Breast epithelium (tissue), 4 donors: ENCODE measurements at regions of chr11 and their contacts with region 1.

Region 1: DNA sequence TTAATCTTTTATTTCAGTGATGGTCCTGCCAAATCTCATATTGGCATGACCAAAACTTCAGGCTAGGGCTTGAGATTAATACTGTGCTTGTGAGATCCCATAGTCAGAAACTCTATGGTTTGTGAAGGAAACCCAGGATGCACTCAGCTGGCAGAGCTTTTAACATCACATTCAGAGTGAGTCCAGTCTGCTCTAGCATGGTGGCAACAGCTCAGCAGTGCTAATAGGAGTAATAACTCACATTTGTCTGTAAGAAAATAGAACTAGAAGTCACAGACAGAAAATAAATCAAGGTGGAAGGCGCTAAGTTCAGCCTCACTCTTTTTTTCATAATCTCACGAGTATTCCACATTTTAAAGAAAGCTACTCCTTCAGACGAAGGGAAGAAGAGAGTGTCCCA is 549.3 kb upstream of the TENM4 start:
- DNase-seq: no peak
- H3K4me3 ChIP-seq: no peak overlapping the region
- H3K27ac ChIP-seq: no peak overlapping the region
- H3K4me1 ChIP-seq: no peaks in the 10 kb centered on the region
- H3K27me3 ChIP-seq: no peaks in the 10 kb centered on the region
- CTCF ChIP-seq: no peak
- POLR2A ChIP-seq: no peak

Region 2: DNA sequence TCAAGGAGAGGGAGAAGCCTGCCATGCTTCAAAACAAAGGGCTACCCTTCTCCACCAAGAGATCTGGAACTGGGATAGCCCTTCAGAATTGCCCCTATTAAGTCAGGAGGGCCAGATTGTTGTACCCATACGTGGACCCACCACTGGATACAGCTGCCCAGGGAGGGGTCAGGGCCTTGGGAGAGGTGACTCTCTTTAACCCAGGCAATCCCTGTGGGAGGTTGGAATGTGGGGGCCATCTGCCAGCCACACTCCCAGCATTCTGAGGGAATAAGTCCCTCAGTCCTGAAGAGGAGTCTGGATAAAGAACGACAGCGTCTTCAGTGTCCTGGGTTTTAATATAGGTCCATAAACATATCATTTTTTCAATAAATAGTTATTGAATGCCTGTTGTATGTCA is 38.9 kb after region 1 on chr11:
- intact Hi-C with region 1: loop called (anchors 2 kb)
- DNase-seq: no peak
- H3K4me3 ChIP-seq: no peak overlapping the region
- H3K27ac ChIP-seq: no peak overlapping the region
- H3K4me1 ChIP-seq: no peaks in the 10 kb centered on the region
- H3K27me3 ChIP-seq: no peaks in the 10 kb centered on the region
- CTCF ChIP-seq: no peak
- POLR2A ChIP-seq: no peak